IMR-90 (cell line): ENCODE measurements at regions of chr12 and their contacts with region 1.

Region 1: DNA sequence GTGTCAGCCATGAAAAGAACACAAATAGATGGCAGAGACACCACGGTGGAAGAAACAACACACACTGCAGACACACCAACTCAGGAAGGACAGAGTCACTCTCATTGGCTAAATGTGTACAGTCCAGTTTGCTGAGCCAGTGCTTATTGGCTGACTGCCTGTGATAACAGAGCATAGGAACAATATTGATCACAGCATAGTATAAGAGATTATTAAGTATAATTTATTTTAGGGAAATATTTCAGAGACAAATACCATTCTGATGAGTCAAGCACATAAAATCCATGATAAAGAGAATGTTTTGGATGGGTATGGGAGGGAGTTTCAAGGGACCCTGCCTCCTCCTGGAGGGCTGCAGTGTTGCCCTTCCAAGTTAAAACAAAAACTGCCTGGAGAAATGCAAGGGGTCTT is 50.9 kb downstream of the BTG1 start:
- DNase-seq: peak; percentile 30
- ATAC-seq: peak; percentile 72
- H3K4me3 ChIP-seq: no peak overlapping the region
- H3K27ac ChIP-seq: peak overlapping the region; percentile 68
- H3K4me1 ChIP-seq: peaks cover 10% of the 10 kb centered on the region
- H3K27me3 ChIP-seq: no peaks in the 10 kb centered on the region
- CTCF ChIP-seq: 0 out of 2 replicates have a peak, but pooled peaks have one; percentile 17
- POLR2A ChIP-seq: no peak
- RAD21 ChIP-seq: peak; percentile 20; the same call in 1 of the 2 replicates

Region 2: GRCh38 chr12:91896286-91897024 is 198.3 kb before region 1 on chr12:
- CTCF ChIA-PET with region 1: no interaction called
- POLR2A ChIA-PET with region 1: no interaction called
- dilution Hi-C with region 1: no loop called
- in situ Hi-C with region 1: no loop called
- intact Hi-C with region 1: no loop called
- DNase-seq: no peak
- ATAC-seq: no peak
- H3K4me3 ChIP-seq: no peak overlapping the region
- H3K27ac ChIP-seq: no peak overlapping the region
- H3K4me1 ChIP-seq: peaks cover 2% of the 10 kb centered on the region; the same call in 1 of the 2 replicates
- H3K27me3 ChIP-seq: no peaks in the 10 kb centered on the region
- CTCF ChIP-seq: no peak
- POLR2A ChIP-seq: no peak
- RAD21 ChIP-seq: no peak

Region 3: DNA sequence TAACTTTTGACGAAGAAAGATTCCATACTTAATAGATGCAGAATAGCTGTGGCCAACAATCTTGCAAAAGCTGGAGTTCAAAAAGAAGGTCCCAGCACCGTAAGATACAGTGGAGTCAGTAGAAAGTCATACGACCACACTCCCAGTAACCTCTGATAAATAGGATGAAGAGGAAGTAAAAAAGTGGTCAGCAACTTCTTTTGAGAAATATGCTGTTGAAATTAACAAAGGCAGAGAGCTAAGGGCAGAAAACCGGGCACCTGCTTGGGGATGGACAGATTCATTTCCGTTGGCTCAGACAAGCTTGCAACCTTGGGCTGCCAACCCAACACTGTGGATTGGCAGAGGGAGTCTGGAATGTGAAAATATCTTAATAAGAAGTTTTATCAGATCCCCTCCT is 10.9 kb after region 1 on chr12:
- CTCF ChIA-PET with region 1: interaction called, 7 read pairs
- POLR2A ChIA-PET with region 1: no interaction called
- dilution Hi-C with region 1: no loop called
- in situ Hi-C with region 1: no loop called
- intact Hi-C with region 1: loop called (anchors 1 kb)
- DNase-seq: no peak
- ATAC-seq: no peak
- H3K4me3 ChIP-seq: no peak overlapping the region
- H3K27ac ChIP-seq: no peak overlapping the region
- H3K4me1 ChIP-seq: peaks cover 12% of the 10 kb centered on the region
- H3K27me3 ChIP-seq: no peaks in the 10 kb centered on the region
- CTCF ChIP-seq: no peak
- POLR2A ChIP-seq: no peak
- RAD21 ChIP-seq: no peak